Naive thymus-derived CD4-positive, alpha-beta T cell (primary cell): ENCODE measurements at regions of chr17 and their contacts with region 1.

Region 1: DNA sequence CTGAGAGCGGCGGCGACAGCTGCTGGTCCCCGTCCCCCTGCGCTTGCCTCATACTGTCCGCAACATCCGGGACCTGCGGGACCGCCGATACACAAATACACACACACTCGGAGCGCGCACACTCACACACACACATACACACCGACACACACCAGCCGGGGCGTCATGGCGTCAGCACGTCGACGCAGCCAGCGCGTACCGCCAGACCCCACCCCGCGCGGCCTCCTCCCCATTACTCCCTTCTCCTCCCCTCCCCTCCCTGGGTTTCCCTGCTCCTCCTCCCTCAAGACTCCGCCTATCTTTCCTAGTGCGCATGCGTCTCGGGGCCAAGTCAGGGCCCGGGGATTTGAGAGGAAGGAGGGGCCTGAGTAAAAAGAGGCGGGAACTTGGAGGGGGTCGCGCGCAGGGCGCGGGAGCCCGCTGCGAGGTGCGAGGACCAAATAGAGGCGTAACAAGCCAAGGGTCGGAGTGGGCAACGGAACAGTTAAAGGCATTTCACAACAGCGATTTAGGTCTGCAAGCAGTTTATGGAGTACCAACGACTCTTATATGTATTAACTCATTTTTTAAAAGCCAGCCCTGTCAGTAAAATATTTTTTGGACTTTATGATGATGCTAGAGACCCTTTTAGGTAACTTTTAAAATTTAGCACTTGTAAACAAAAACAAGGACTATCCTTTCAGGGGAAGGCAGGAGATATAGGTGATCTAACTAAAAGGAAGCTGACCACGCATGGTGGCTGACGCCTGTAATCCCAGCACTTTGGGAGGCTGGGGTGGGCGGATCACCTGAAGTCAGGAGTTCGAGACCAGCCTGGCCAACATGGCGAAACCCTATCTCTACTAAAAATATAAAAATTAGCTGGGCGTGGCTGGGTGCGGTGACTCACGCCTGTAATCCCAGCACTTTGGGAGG is at the start of gene SPOP:
- DNase-seq: peak; percentile 94 to 100 (median 99)
- ATAC-seq: peak; percentile 98
- H3K4me3 ChIP-seq: peak within 1 kb of the TSS; percentile 88
- H3K4me3 Mint-ChIP-seq: peak within 1 kb of the TSS; percentile 88 to 98 (median 94)
- H3K27ac ChIP-seq: peak within 1 kb of the TSS; percentile 87
- H3K27ac Mint-ChIP-seq: peak within 1 kb of the TSS; percentile 94 to 100 (median 98)
- H3K4me1 ChIP-seq: peaks cover 25 to 26% of the 10 kb centered on the region in 2 donors
- H3K4me1 Mint-ChIP-seq: peaks cover 36 to 65% (median 47%) of the 10 kb centered on the region in 7 donors
- H3K27me3 ChIP-seq: no peaks in the 10 kb centered on the region
- H3K27me3 Mint-ChIP-seq: peaks cover 0 to 13% (median 0%) of the 10 kb centered on the region in 5 donors
- total RNA-seq, gene SPOP: 59.6 to 94.8 (median 80.9) TPM

Region 2: GRCh38 chr17:47970704-47971463 is 1707.3 kb before region 1 on chr17 and contains the start of gene CDK5RAP3:
- CTCF ChIA-PET with region 1: no interaction called
- POLR2A ChIA-PET with region 1: no interaction called
- intact Hi-C with region 1: loop called in 1 of 2 experiments (anchors 5 kb)
- DNase-seq: peak; percentile 93 to 99 (median 97)
- ATAC-seq: peak; percentile 100
- H3K4me3 ChIP-seq: peak within 1 kb of the TSS; percentile 96
- H3K4me3 Mint-ChIP-seq: peak within 1 kb of the TSS; percentile 95 to 100 (median 99)
- H3K27ac ChIP-seq: peak within 1 kb of the TSS; percentile 71
- H3K27ac Mint-ChIP-seq: peak within 1 kb of the TSS; percentile 83 to 96 (median 93)
- H3K4me1 ChIP-seq: peaks cover 6 to 12% of the 10 kb centered on the region in 2 donors
- H3K4me1 Mint-ChIP-seq: peaks cover 14 to 41% (median 26%) of the 10 kb centered on the region in 7 donors
- H3K27me3 ChIP-seq: no peaks in the 10 kb centered on the region
- H3K27me3 Mint-ChIP-seq: no peaks in the 10 kb centered on the region
- total RNA-seq, gene CDK5RAP3: 238 to 349 (median 276) TPM

Region 3: GRCh38 chr17:49414622-49415350 is 263.4 kb before region 1 on chr17 and contains the start of gene PHB1:
- CTCF ChIA-PET with region 1: no interaction called
- POLR2A ChIA-PET with region 1: no interaction called
- intact Hi-C with region 1: loop called (anchors 2 to 10 kb)
- DNase-seq: peak; percentile 75 to 98 (median 93)
- ATAC-seq: peak; percentile 99
- H3K4me3 ChIP-seq: peak within 1 kb of the TSS; percentile 77
- H3K4me3 Mint-ChIP-seq: peak within 1 kb of the TSS; percentile 92 to 99 (median 96)
- H3K27ac ChIP-seq: peak within 1 kb of the TSS; percentile 77
- H3K27ac Mint-ChIP-seq: peak within 1 kb of the TSS; percentile 78 to 99 (median 92)
- H3K4me1 ChIP-seq: peaks cover 8% of the 10 kb centered on the region in 2 donors
- H3K4me1 Mint-ChIP-seq: peaks cover 11 to 30% (median 26%) of the 10 kb centered on the region in 7 donors
- H3K27me3 ChIP-seq: no peaks in the 10 kb centered on the region
- H3K27me3 Mint-ChIP-seq: peaks cover 0 to 3% (median 0%) of the 10 kb centered on the region in 5 donors
- total RNA-seq, gene PHB1: 50.0 to 186 (median 54.4) TPM

Region 4: GRCh38 chr17:49694847-49695683 is 16.9 kb after region 1 on chr17:
- CTCF ChIA-PET with region 1: interaction called, 18 read pairs
- POLR2A ChIA-PET with region 1: interaction called, 11 read pairs
- intact Hi-C with region 1: loop called (anchors 1 to 2 kb)
- DNase-seq: peak; percentile 45 to 78 (median 62)
- ATAC-seq: peak; percentile 67
- H3K4me3 ChIP-seq: no peak overlapping the region
- H3K4me3 Mint-ChIP-seq: peak overlapping the region in 6 of 10 donors; percentile 23 to 62 (median 57)
- H3K27ac ChIP-seq: no peak overlapping the region
- H3K27ac Mint-ChIP-seq: peak overlapping the region in 8 of 9 donors; percentile 76 to 92 (median 86)
- H3K4me1 ChIP-seq: peaks cover 13 to 30% of the 10 kb centered on the region in 2 donors
- H3K4me1 Mint-ChIP-seq: peaks cover 28 to 66% (median 50%) of the 10 kb centered on the region in 7 donors
- H3K27me3 ChIP-seq: no peaks in the 10 kb centered on the region
- H3K27me3 Mint-ChIP-seq: no peaks in the 10 kb centered on the region

Region 5: DNA sequence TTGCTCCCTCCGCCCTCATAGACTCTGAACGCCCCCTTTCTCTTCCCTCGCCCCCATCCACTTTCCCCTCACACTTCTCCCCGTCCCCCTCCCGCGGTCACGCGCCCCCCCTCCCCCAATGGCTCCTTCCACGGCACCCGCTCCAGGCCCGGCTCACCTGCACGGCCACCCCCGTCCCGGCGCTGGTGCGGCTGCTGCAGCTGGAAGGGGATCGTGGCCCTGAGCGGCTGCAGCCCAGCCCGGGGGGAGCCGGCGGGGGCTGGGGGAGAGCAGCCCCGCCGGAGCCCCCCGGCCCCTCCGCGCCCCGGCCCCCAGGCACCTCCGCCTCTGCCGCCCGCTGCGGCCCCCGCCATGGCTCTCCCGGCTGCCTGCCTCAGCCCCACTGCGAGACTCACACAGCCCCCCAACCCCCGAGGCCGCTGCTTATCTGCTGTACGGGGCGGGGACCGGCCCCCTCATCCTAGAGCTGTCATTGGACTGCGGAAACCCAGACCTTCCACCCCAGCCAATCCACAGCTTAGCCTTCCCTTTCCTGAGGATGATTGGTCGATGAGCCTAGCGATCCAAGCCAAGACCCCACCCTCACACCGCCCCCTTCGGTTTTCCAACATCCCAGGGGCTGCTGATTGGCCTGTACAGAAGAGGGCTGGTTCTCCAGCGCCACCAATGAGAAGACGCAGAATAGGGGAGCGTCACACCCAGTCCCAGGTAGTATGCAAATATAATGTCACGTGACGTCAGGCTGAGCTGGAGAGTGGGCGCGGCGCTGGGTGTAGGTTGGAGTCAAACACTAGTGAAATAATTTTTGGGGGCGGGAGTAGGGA is 85.8 kb after region 1 on chr17 and contains the start of gene FAM117A:
- CTCF ChIA-PET with region 1: no interaction called
- POLR2A ChIA-PET with region 1: interaction called, 5 read pairs
- intact Hi-C with region 1: loop called (anchors 1 kb)
- DNase-seq: peak; percentile 72 to 99 (median 98)
- ATAC-seq: peak; percentile 93
- H3K4me3 ChIP-seq: peak within 1 kb of the TSS; percentile 82
- H3K4me3 Mint-ChIP-seq: peak within 1 kb of the TSS; percentile 92 to 99 (median 96)
- H3K27ac ChIP-seq: peak within 1 kb of the TSS; percentile 65
- H3K27ac Mint-ChIP-seq: peak within 1 kb of the TSS; percentile 62 to 96 (median 93)
- H3K4me1 ChIP-seq: peaks cover 32 to 36% of the 10 kb centered on the region in 2 donors
- H3K4me1 Mint-ChIP-seq: peaks cover 35 to 52% (median 51%) of the 10 kb centered on the region in 7 donors
- H3K27me3 ChIP-seq: no peaks in the 10 kb centered on the region
- H3K27me3 Mint-ChIP-seq: peaks cover 0 to 35% (median 0%) of the 10 kb centered on the region in 5 donors
- total RNA-seq, gene FAM117A: 31.8 to 99.1 (median 58.5) TPM

Region 6: DNA sequence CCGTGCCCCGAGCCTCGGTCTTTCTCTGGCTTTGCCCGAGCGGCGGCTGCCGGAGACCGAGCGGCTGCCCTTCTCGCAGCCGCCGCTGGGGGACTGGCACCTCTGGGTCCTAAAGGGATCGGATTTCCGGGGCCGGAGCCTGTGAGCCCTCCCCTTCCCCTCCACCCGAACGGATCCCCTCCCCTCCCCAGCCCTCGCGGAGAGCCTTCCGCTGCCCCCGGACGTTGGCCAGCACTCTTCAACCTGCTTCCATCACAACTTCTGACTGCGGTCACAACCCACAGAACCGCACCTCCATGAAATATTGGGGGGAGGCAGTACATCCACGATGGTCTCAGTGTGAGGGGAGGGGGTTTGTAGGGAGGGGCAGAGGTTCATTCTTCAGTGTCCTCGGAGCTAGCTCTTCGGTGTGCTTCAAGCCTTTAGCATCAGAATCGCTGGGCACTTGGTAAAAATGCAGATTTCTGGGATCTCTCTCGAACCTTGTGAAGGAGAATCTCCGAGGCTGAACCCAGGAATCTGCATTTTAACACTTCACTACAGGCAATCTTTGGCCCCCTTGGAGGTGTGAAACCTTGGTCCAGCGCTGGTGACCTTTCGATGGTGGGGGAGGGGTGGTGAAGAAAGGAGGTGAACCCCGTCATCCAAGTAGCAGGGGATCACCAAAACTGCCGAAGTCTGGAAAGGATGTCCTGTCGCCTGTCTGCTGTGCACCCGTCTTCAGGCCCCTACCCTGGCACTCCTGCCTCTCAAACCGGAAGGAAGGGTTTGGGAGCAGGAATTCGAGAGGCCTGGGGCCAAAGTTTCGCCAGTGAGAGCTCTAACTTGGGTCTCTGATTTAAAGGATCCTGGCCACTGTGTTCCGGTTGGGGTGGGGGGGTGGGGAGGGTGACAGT is 473.1 kb after region 1 on chr17:
- CTCF ChIA-PET with region 1: no interaction called
- POLR2A ChIA-PET with region 1: no interaction called
- intact Hi-C with region 1: loop called (anchors 5 kb)
- DNase-seq: peak; percentile 73 to 88 (median 79)
- ATAC-seq: peak; percentile 84
- H3K4me3 ChIP-seq: peak overlapping the region; percentile 94
- H3K4me3 Mint-ChIP-seq: peak overlapping the region; percentile 82 to 95 (median 87)
- H3K27ac ChIP-seq: peak overlapping the region; percentile 74
- H3K27ac Mint-ChIP-seq: peak overlapping the region; percentile 71 to 96 (median 84)
- H3K4me1 ChIP-seq: peaks cover 26 to 37% of the 10 kb centered on the region in 2 donors
- H3K4me1 Mint-ChIP-seq: peaks cover 11 to 52% (median 44%) of the 10 kb centered on the region in 7 donors
- H3K27me3 ChIP-seq: no peaks in the 10 kb centered on the region
- H3K27me3 Mint-ChIP-seq: no peaks in the 10 kb centered on the region